Transverse colon (tissue), 4 donors: ENCODE measurements at regions of chr1 and their contacts with region 1.

Region 1: GRCh38 chr1:55140546-55140983 is 74.6 kb downstream of the USP24 start:
- DNase-seq: peak; percentile 69
- H3K4me3 ChIP-seq: no peak overlapping the region
- H3K27ac ChIP-seq: peak overlapping the region in 3 of 4 donors; percentile 6 to 41 (median 24)
- H3K4me1 ChIP-seq: peaks cover 0 to 8% (median 1%) of the 10 kb centered on the region in 4 donors
- H3K27me3 ChIP-seq: no peaks in the 10 kb centered on the region
- CTCF ChIP-seq: peak; percentile 72 to 76 (median 74)
- EP300 ChIP-seq: no peak
- POLR2A ChIP-seq: no peak

Region 2: DNA sequence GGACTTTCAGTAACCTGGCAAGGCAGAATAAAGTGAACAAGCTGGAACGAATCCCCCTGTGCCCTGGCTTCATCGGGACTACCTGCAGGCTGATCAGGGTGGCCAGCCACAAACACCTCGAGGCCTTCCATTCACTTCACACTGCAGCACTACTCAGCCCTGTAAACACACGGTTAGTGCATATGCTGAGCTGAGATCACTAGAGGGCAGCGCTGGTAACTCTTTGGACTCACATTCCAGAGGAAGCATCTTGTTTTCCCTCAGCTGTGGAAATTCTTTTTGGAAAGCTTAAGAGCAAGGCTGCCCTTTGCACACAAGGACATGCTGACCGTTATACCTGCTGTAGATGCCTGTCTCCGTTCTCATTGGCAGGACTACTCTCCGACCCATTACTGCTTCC is 69.1 kb before region 1 on chr1:
- in situ Hi-C with region 1: no loop called
- intact Hi-C with region 1: no loop called
- DNase-seq: no peak
- H3K4me3 ChIP-seq: no peak overlapping the region
- H3K27ac ChIP-seq: no peak overlapping the region
- H3K4me1 ChIP-seq: no peaks in the 10 kb centered on the region
- H3K27me3 ChIP-seq: no peaks in the 10 kb centered on the region
- CTCF ChIP-seq: no peak
- EP300 ChIP-seq: no peak
- POLR2A ChIP-seq: no peak

Region 3: DNA sequence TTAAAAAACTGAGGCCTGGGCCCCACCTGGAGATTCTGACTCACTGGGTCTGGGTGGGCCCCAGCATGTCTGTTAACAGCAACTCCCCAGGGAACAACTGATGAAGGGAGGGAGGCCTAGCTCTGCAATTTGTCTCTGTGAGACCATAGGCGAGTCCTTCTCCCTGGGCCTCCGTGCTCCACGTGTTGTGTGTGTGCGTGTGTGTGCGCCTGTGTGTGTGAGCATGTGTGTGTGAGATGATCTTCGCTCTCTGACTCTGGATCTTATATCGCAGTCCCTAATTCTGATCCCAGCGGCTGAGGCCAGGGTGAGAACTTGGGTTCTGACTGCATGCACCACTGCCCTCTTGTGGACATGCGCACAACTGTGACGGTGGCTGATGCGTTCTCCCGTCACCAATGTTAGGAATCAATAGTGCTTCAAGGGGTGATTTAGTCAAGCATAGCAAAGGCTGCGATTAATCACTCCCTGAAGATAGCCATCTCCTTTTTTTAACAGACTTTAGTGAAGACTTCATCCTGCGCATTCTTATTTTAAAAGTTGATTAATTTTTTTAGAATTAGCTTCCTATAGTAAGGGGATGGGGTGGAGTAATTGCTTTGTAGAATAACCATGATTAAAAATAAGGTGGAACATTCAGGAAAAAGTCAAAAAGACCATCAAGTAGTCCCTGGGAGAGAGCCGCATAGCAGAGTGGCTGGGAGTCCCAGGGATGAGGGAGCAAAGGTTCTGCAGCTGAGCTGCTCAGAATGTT is 137.0 kb after region 1 on chr1:
- in situ Hi-C with region 1: loop called (anchors 5 to 25 kb)
- intact Hi-C with region 1: loop called (anchors 2 kb)
- DNase-seq: peak; percentile 84
- H3K4me3 ChIP-seq: no peak overlapping the region
- H3K27ac ChIP-seq: no peak overlapping the region
- H3K4me1 ChIP-seq: peaks cover 4 to 27% (median 6%) of the 10 kb centered on the region in 4 donors
- H3K27me3 ChIP-seq: no peaks in the 10 kb centered on the region
- CTCF ChIP-seq: peak; percentile 80 to 92 (median 84)
- EP300 ChIP-seq: no peak
- POLR2A ChIP-seq: no peak